ENCODE measurements at regions of chr12 and their contacts with region 1.

Region 1: DNA sequence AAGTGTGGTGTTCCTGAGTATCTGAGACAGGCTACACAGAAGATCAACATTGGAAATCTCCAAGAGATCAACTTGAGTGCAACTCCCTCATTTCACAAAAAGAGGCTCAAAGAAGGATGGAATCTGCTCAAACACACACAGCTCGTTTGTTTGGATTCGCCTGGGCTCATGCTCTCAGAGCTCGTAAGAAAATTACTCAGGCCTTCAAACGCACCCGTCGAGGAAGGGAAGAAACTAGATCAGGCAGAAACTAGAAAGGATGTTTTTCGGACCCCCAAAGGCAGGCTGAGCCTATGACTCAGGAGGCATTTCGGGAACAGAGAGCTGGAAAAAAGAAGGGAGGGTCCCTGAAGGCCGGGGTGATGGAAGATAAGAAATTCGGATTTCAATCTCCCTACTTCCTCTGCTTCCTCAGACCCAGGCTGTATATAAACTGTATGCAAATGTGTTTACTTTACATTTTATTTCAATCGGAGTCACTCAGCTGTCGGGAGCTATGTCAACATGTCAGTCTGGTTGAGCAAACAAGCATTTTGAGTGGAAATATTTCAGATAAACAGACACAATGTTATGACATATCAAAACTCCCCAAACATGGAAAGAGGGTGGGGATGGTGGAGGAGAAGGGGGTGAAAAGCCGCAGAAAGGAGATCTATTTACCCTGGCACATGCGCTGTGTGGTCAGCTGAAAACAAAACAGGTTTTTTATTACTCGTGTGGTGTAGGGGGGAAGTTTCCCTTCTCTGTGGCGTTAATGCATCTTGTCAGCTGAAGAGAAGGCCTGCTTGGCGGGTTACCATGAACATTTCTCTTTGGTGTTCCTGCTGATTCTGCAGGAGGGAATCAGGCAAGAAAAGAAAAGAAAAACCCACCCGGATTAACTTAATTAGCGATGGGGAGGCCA is 129.1 kb upstream of the TBX3 start:
- DNase-seq: no peak
- H3K4me3 ChIP-seq: peak overlapping the region in 1 of 3 donors; percentile 4
- H3K27ac ChIP-seq: peak overlapping the region in 1 of 2 donors; percentile 12
- H3K4me1 ChIP-seq: no peaks in the 10 kb centered on the region
- H3K27me3 ChIP-seq: no peaks in the 10 kb centered on the region
- CTCF ChIP-seq: no peak
- POLR2A ChIP-seq: no peak

Region 2: DNA sequence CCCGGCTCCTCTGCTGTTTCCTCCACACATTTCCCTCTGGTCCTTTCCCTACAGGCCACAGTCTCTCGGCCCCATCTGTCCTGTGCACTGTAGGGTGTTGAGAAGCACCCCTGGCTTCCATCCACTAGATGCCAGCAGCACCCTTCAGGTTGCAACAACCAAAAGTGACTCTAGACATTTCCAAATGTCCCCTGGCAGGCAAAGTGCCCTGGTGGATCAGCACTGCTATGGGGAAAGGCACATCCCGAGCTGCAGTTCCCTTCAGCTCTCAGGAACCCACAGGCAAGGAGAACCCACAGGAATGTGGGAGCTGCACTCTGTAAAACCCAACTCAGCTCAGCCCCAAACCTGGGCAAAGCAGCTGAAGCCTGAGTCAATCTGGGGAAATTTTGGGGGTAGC is 924.0 kb before region 1 on chr12:
- intact Hi-C with region 1: loop called (anchors 5 kb)
- DNase-seq: peak in 1 of 2 donors; percentile 50
- H3K4me3 ChIP-seq: no peak overlapping the region
- H3K27ac ChIP-seq: no peak overlapping the region
- H3K4me1 ChIP-seq: peaks cover 0 to 9% of the 10 kb centered on the region in 2 donors
- H3K27me3 ChIP-seq: no peaks in the 10 kb centered on the region
- CTCF ChIP-seq: peak in 1 of 3 donors; percentile 40
- POLR2A ChIP-seq: no peak

Region 3: DNA sequence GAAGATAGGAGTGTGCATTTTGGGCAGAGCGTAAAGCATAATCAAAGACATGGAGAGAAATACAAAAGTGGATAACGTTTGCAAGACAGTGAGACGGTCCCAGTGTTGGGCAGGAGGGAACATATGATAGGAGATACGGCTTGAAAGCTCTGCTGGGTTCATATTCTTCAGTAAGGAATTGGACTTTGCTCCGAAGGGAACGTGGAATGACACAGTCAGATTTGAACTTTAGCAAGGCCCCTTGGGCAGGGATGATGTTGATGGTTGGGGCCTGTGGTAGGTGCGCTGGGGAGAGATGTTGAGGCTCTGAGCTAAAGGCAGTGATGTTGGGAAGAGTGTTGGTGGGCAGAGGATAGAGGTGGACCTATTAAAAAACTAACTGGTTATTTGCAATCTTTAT is 14.4 kb after region 1 on chr12:
- intact Hi-C with region 1: loop called (anchors 1 kb)
- DNase-seq: no peak
- H3K4me3 ChIP-seq: no peak overlapping the region
- H3K27ac ChIP-seq: no peak overlapping the region
- H3K4me1 ChIP-seq: no peaks in the 10 kb centered on the region
- H3K27me3 ChIP-seq: no peaks in the 10 kb centered on the region
- CTCF ChIP-seq: no peak
- POLR2A ChIP-seq: no peak

Measured in breast epithelium (tissue), 4 donors.